Sciatic nerve (tissue), 2 donors: ENCODE measurements at regions of chr6 and their contacts with region 1.

Region 1: GRCh38 chr6:137931849-137932465 is 64.9 kb downstream of the TNFAIP3 start:
- DNase-seq: no peak
- ATAC-seq: no peak

Region 2: DNA sequence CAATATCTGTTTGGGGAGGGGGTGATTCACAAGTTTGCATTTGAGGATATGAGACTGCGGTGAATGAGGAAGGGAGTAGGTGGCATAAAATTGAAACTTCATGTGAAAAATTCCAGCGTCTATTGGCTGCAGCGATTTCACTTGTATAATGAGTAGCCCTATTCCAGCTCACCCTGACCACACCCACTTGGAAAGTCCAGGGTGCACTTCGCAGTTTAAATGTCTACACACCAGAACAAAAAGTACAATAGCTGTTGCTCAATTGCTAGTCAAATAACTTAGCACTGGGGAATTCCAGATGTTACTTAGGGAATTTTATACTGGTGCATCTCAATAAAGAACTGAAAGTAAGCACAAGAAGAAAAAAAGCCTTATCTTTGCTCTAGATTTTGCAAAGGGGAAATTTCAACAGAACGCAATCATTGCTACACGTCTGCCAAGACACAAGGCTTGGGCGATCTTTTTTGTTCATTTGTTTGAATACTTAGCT is 58.6 kb before region 1 on chr6:
- intact Hi-C with region 1: no loop called
- DNase-seq: no peak
- ATAC-seq: peak; percentile 95

Region 3: GRCh38 chr6:137906020-137906472 is 25.9 kb before region 1 on chr6:
- intact Hi-C with region 1: loop called (anchors 1 kb)
- DNase-seq: no peak
- ATAC-seq: no peak

Region 4: DNA sequence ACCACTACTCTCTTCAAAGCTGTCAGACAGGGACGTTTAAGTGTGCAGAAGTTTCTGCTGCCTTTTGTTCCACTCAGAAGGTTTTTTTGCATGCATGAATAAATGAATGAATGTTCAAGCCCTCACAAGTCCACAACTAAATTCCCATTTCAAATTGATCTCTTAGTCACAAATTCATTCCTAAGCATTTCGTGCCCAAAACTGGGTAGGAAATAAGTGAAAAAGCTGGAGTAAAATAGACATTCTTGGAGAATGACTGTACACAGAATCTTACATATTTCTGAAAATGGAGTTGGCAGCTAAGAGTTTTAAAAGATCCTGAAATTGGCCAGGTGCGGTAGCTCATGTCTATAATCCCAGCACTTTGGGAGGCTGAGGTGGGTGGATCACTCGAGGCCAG is 57.7 kb after region 1 on chr6:
- intact Hi-C with region 1: no loop called
- DNase-seq: no peak
- ATAC-seq: no peak

Region 5: GRCh38 chr6:138188278-138188941 is 256.5 kb after region 1 on chr6:
- intact Hi-C with region 1: no loop called
- DNase-seq: no peak
- ATAC-seq: peak; percentile 35